Heart left ventricle (tissue), 16 donors: ENCODE measurements at regions of chr11 and their contacts with region 1.

Region 1: DNA sequence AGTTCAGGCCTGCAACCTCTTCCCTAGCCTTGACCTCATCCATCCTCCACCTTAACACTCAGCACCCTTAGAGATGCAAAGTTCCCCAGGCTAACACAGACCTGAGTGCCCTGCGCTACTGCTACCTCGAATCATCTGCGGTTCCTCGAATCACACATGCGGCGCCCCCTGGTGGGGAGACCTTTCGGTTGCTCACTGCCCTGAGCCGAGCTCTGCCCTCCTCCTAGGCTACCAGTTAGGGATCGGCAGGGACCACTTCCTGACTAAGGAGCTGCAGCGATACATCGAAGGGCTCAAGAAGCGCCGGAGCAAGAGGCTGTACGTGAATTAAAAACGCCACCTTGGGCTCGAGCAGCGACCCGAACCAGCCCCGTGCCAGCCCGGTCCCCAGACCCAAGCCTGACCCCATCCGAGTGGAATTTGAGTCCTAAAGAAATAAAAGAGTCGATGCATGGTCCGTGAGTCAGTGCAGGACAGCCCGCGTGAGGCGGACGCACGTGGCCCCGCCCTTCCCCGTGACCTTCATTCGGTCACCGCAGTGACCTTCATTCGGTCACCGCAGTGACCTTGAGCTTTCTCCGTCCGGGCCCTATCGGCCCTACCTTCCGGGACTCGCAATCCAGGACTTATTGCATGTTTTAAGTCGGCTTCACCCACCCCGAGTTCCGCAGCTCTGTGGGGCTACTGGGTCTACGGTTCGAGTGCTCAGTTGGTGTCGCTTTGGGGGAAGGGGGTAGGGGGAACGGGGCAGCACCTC is 830 bp upstream of the ESRRA start:
- DNase-seq: peak; percentile 91 to 96 (median 94)
- ATAC-seq: peak; percentile 38 to 67 (median 54)
- H3K4me3 ChIP-seq: peak overlapping the region; percentile 23 to 93 (median 76)
- H3K27ac ChIP-seq: peak overlapping the region; percentile 90 to 98 (median 97)
- H3K4me1 ChIP-seq: peaks cover 2 to 47% (median 33%) of the 10 kb centered on the region in 12 donors
- H3K27me3 ChIP-seq: peaks cover 0 to 17% (median 6%) of the 10 kb centered on the region in 9 donors
- CTCF ChIP-seq: peak; percentile 81 to 94 (median 89)
- POLR2A ChIP-seq: no peak

Region 2: GRCh38 chr11:64185816-64186498 is 118.5 kb before region 1 on chr11 and contains the start of gene STIP1:
- intact Hi-C with region 1: loop called in 1 of 10 experiments (anchors 5 kb)
- DNase-seq: peak; percentile 98 to 100 (median 99)
- ATAC-seq: peak; percentile 87 to 95 (median 92)
- H3K4me3 ChIP-seq: peak within 1 kb of the TSS in 11 of 12 donors; percentile 41 to 83 (median 76)
- H3K27ac ChIP-seq: peak within 1 kb of the TSS; percentile 91 to 99 (median 97)
- H3K4me1 ChIP-seq: peaks cover 0 to 49% (median 36%) of the 10 kb centered on the region in 12 donors
- H3K27me3 ChIP-seq: no peaks in the 10 kb centered on the region
- CTCF ChIP-seq: peak in 8 of 12 donors; percentile 20 to 70 (median 40)
- POLR2A ChIP-seq: no peak
- total RNA-seq, gene STIP1: 74.9 to 143 (median 88.8) TPM

Region 3: GRCh38 chr11:64240394-64241174 is 63.9 kb before region 1 on chr11 and contains the start of gene FKBP2:
- intact Hi-C with region 1: loop called in 1 of 10 experiments (anchors 2 kb)
- DNase-seq: peak; percentile 97 to 99 (median 98)
- ATAC-seq: peak; percentile 68 to 78 (median 74)
- H3K4me3 ChIP-seq: peak within 1 kb of the TSS; percentile 65 to 99 (median 80)
- H3K27ac ChIP-seq: peak within 1 kb of the TSS; percentile 95 to 100 (median 99)
- H3K4me1 ChIP-seq: peaks cover 0 to 68% (median 34%) of the 10 kb centered on the region in 12 donors
- H3K27me3 ChIP-seq: no peaks in the 10 kb centered on the region
- CTCF ChIP-seq: no peak
- POLR2A ChIP-seq: peak; percentile 65 to 91
- total RNA-seq, gene FKBP2: 35.0 to 71.5 (median 51.8) TPM

Region 4: GRCh38 chr11:64269380-64270234 is 34.9 kb before region 1 on chr11:
- intact Hi-C with region 1: loop called in 3 of 10 experiments (anchors 1 to 2 kb)
- DNase-seq: peak; percentile 98 to 99 (median 98)
- ATAC-seq: peak; percentile 86 to 91 (median 90)
- H3K4me3 ChIP-seq: peak overlapping the region; percentile 63 to 98 (median 80)
- H3K27ac ChIP-seq: peak overlapping the region; percentile 86 to 100 (median 97)
- H3K4me1 ChIP-seq: peaks cover 2 to 51% (median 33%) of the 10 kb centered on the region in 12 donors
- H3K27me3 ChIP-seq: no peaks in the 10 kb centered on the region
- CTCF ChIP-seq: peak in 6 of 12 donors; percentile 6 to 53 (median 12)
- POLR2A ChIP-seq: peak in 1 of 2 donors; percentile 50

Region 5: DNA sequence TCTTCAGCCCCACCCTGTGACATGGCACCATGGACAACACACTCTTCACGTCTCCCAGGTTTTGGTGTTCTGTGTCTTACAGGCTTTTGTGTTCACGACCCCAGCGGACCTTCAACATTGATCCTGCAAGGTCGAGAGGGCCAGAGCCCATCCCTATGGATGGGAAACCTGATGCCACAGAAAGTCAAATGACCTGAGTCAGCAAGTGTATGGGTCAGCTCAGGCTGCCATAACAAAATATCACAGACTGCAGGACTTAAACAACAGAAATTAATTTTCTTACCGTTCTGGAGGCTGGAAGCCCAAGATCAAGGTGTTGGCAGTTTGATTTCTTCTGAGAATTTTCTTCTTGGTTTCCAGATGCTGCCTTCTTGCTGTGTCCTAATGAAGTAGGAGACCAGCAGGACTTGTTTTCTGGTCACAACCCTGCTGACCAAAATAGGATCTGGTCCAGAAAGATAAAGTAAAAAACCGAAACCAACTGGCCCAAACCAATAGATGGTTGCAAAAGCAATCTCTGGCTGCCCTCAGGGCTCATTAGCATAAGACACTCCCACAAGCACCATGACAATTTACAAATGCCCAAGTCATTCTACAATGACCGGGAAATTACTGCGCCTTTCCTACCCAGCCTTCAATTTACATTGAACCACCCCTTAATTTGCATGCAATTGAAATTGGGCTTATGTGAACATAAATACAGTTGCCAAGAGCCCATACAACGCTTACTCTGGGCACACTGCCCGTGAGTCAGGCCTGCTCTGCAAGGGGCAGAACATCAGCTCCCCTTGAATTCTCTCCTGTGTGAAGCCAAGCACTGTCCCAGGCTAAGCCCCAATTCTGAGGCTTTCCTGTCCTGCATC is 168.3 kb after region 1 on chr11:
- intact Hi-C with region 1: no loop called
- DNase-seq: no peak
- ATAC-seq: no peak
- H3K4me3 ChIP-seq: no peak overlapping the region
- H3K27ac ChIP-seq: no peak overlapping the region
- H3K4me1 ChIP-seq: no peaks in the 10 kb centered on the region
- H3K27me3 ChIP-seq: peaks cover 0 to 19% (median 6%) of the 10 kb centered on the region in 9 donors
- CTCF ChIP-seq: no peak
- POLR2A ChIP-seq: no peak